Left cardiac atrium (tissue), 4 donors: ENCODE measurements at regions of chr17 and their contacts with region 1.

Region 1: DNA sequence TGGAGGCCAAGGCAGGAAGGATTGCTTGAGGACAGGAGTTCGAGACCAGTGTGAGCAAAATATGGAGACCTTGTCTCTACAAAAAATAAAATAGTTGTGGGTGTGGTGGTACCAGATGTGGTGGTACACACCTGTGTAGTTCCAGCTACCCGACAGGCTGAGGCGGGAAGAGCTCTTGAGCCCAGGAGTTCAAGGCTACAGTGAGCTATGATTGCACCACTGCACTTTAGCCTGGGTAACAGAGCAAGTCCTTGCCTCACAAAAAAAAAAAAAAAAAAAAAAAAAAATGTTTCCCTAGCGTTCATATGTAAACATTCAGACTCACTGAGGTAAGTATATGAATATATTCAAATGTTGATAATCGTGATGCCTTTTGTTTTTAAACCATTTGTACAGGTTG is 39.5 kb downstream of the CLUH start:
- DNase-seq: no peak
- ATAC-seq: no peak

Region 2: DNA sequence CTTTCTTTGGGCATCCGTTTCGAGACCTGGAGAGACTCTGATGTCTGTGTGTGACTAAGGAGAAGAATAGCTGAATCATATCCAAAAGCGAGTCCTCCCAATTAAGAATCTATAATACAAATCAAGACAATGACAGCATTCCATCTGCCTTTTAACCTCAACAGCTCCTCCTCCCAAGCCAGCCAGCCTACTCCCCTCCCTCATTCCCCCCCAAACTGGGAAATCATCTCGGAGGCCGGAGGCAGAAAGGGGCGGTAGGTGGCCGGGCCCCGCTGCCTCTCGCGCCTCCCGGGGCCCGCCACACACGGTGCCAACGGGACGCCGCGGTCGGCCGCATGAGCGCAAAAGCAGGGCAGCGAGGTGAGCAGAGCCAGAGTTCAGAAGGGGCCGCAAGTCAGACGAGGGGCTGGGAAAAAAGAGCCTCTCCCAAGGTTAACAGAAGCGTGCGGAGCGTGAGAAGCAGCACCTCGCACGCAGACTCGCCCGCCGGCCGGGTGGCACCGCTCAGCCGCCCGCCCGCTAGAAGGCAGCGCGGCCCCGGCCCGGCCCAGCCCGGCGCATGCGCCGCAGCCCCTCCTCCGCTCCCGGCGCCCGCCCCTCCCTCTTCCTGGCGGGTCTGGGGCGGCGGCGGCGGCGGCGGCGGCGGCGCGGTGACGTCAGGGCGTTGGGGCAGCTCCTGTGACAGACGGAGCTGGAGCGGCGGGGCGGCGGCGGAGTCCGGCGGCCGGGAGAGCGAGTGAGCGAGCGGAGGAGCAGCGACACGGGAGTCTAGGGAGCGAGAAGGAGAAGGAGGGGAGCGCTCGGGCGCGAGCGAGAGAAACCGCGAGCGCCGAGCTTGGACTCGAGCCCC is 78.8 kb before region 1 on chr17 and contains the start of gene PAFAH1B1:
- intact Hi-C with region 1: loop called in 1 of 2 experiments (anchors 10 kb)
- DNase-seq: peak; percentile 94
- ATAC-seq: peak; percentile 95 to 96
- total RNA-seq, gene PAFAH1B1: 84.0 to 120 TPM

Region 3: DNA sequence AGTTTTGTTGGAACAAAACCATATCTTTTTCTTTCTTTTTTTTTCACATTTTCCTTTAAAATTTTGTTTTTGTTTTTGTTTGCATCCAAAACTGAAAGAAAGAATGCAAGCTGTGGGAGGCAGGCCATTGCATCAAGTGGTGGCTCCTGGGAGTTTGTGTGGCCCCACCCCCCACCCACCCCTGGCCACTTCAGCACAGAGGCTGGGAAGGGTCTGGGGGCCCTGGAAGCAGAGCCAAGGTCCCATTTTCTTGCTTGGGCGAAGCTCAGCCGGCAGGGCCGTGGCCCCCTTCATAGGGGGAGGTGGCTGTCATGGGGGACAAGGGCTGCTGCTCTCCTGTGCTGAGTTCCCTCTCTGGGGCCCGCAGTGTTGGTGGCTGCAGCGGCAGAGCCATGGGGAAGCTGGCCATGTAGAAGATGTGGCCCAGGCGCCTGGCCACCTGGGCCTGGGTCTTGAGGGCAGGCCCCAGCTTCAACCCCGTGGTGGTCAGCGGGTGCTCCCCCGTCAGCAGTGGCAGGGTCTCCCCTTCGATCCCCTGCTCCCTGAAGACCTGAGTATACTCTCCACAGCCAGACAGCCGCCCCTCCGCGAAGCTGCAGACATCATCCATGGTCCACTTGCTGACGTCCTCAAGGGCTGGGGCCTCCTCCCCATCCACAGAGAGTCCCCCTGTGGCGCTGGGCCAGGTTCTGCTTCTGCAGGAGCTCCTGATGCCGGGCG is 58.8 kb before region 1 on chr17:
- intact Hi-C with region 1: no loop called
- DNase-seq: no peak
- ATAC-seq: peak in 1 of 2 donors; percentile 10